ENCODE measurements at regions of chr5 and their contacts with region 1.

Region 1: DNA sequence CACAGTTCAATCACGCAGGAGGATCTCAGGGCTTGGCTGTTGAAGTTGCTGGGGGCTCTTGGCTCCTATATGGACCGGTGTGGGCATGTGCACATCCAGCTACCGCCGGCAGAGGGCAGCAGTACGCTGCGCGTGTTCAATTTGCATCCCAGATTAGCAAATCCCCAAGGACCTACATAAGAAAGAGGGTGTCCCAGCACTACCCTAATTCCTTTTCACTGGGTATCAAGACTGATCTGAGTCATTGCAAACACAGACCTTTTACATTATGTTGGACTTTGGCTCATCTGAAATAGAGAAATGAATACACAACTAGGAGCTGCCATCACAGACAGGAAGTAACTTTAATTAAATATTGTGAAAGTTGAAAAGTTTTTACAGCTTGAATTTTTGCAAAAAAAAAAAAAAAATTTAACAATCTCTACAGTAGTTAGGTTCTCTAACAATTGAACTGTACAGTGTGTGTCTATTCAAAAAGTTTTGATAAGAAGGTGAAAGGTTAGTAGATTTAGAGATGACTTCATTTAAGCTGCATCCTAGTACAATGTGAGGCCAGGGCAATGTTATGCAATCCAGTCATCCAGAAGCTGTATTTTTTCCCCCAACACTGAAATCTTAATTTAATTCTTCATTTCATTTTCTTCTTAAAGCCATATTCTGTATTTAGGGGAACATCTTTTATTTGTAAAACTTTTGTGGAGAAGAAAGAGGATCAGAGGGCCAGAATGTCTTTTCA is 404.0 kb downstream of the EBF1 start:
- DNase-seq: peak; percentile 72
- H3K4me3 Mint-ChIP-seq: no peak overlapping the region
- H3K27ac Mint-ChIP-seq: no peak overlapping the region
- H3K4me1 Mint-ChIP-seq: peaks cover 6% of the 10 kb centered on the region
- H3K27me3 Mint-ChIP-seq: peaks cover 22% of the 10 kb centered on the region
- CTCF ChIP-seq: peak; percentile 99

Region 2: DNA sequence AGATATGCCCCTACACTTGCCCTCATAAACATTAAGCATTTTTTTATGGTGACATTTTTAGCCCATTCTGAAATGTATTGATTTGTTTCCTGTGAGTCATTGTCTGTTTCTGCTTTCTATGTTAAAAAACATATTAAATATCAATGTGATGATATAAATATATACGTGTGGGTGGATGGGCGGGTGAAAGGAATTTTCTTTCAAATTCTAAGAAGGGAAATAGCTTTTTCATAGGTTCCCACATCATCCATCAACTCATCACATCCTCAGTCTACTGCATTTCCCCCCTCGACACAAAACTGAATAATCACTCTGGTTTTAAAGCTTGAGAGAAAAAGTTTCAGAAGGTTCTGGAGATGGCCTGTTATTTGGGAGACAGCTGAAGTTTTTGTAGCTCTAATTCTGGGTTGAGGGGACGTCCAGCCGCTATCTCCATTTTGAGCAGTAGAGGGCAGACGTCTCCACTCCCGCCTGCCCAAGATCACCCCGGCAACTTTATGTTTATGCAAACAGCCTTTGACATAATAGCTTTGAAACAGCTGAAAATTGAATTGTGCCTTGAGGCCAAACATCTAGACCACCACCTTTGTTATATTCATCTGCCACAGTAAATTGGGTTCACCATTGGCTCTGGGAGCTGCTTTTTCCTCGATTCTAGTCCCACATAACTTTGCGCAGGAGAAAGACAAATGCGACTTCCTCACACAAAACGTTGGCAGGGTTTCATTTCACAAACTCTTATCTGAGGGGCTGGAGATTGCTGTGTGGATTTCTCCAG is 620.6 kb before region 1 on chr5:
- CTCF ChIA-PET with region 1: interaction called, 22 read pairs
- POLR2A ChIA-PET with region 1: interaction called, 4 read pairs
- intact Hi-C with region 1: loop called (anchors 1 kb)
- DNase-seq: peak; percentile 73
- H3K4me3 Mint-ChIP-seq: no peak overlapping the region
- H3K27ac Mint-ChIP-seq: peak overlapping the region; percentile 61
- H3K4me1 Mint-ChIP-seq: peaks cover 7% of the 10 kb centered on the region
- H3K27me3 Mint-ChIP-seq: no peaks in the 10 kb centered on the region
- CTCF ChIP-seq: peak; percentile 91

Region 3: GRCh38 chr5:158354958-158355357 is 340.8 kb before region 1 on chr5:
- CTCF ChIA-PET with region 1: no interaction called
- POLR2A ChIA-PET with region 1: no interaction called
- intact Hi-C with region 1: no loop called
- DNase-seq: no peak
- H3K4me3 Mint-ChIP-seq: no peak overlapping the region
- H3K27ac Mint-ChIP-seq: no peak overlapping the region
- H3K4me1 Mint-ChIP-seq: no peaks in the 10 kb centered on the region
- H3K27me3 Mint-ChIP-seq: no peaks in the 10 kb centered on the region
- CTCF ChIP-seq: no peak

Region 4: GRCh38 chr5:158679221-158679641 is 16.5 kb before region 1 on chr5:
- CTCF ChIA-PET with region 1: interaction called, 54 read pairs
- POLR2A ChIA-PET with region 1: no interaction called
- intact Hi-C with region 1: no loop called
- DNase-seq: no peak
- H3K4me3 Mint-ChIP-seq: no peak overlapping the region
- H3K27ac Mint-ChIP-seq: no peak overlapping the region
- H3K4me1 Mint-ChIP-seq: peaks cover 5% of the 10 kb centered on the region
- H3K27me3 Mint-ChIP-seq: peaks cover 11% of the 10 kb centered on the region
- CTCF ChIP-seq: no peak

Region 5: DNA sequence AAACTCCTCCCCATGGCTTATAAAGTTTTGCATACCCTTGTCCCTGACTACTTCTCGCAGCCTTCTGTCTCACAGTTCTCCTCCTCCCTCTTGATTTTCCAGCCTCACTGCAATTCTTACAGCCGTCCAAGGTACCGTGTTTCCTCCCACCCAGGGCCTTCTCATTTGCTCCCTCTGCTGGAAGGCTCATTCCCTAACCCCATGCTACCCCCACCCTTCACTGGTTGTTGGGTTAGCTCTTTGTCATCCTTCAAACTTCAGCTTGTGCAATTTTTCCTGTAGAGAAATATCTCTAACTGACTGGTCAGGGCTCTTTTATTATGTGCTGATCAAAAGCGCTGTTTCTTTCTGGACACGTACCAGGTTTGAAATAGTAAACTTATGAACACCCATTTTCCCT is 74.7 kb after region 1 on chr5:
- CTCF ChIA-PET with region 1: interaction called, 3 read pairs
- POLR2A ChIA-PET with region 1: no interaction called
- intact Hi-C with region 1: loop called (anchors 2 kb)
- DNase-seq: peak; percentile 50
- H3K4me3 Mint-ChIP-seq: no peak overlapping the region
- H3K27ac Mint-ChIP-seq: peak overlapping the region; percentile 1
- H3K4me1 Mint-ChIP-seq: peaks cover 15% of the 10 kb centered on the region
- H3K27me3 Mint-ChIP-seq: peaks cover 22% of the 10 kb centered on the region
- CTCF ChIP-seq: no peak

Region 6: GRCh38 chr5:159094745-159095144 is 399.0 kb after region 1 on chr5:
- CTCF ChIA-PET with region 1: interaction called, 513 read pairs
- POLR2A ChIA-PET with region 1: interaction called, 3 read pairs
- intact Hi-C with region 1: no loop called
- DNase-seq: peak; percentile 99
- H3K4me3 Mint-ChIP-seq: no peak overlapping the region
- H3K27ac Mint-ChIP-seq: no peak overlapping the region
- H3K4me1 Mint-ChIP-seq: peaks cover 38% of the 10 kb centered on the region
- H3K27me3 Mint-ChIP-seq: peaks cover 23% of the 10 kb centered on the region
- CTCF ChIP-seq: no peak

Region 7: GRCh38 chr5:159120446-159120845 is 424.7 kb after region 1 on chr5:
- CTCF ChIA-PET with region 1: interaction called, 15 read pairs
- POLR2A ChIA-PET with region 1: interaction called, 4 read pairs
- intact Hi-C with region 1: no loop called
- DNase-seq: no peak
- H3K4me3 Mint-ChIP-seq: peak overlapping the region; percentile 1
- H3K27ac Mint-ChIP-seq: peak overlapping the region; percentile 13
- H3K4me1 Mint-ChIP-seq: peaks cover 10% of the 10 kb centered on the region
- H3K27me3 Mint-ChIP-seq: no peaks in the 10 kb centered on the region
- CTCF ChIP-seq: no peak

Measured in MCF 10A (cell line).